ENCODE measurements at regions of chr7 and their contacts with region 1.

Region 1: DNA sequence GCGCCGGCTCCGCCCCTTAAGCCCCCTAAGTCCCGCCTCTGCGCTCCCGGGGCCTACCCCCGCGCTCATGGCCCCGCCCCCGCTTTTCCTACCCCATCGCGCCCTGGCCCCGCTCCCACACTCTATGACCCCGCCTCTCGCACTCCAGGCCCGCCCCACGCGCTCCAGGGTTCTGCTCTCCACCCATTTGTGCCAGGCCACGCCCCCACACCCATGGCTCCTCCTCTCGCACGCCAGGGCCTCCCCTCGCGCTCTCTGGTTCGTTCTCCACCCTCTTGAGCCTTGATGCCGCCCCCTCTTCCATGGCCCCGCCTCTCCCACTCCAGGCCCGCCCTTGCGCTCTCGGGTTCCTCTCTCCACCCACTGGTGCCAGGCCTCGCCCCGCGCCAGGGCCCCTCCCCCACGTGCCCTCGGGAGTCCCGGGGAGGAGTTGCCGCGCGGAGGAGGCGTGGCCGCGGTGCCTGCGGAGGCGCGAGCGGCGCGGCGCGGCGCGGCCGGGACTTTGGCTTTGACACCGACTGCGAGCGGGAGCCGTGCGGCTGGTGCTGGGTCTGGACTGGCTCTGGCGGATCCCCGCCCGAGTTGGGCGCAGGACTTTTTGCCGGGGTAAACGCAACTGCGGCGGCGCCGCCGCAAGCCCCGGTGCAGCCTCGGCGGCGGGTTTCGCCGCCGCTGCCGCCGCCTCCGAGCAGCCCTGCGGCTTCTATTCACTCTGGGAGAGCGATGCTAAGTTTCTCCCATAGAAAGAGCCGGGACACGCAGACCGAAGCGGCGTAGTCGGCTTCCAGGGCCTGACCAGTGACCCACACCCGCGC is at the start of gene EEPD1:
- DNase-seq: peak; percentile 97 to 100
- H3K4me3 ChIP-seq: peak within 1 kb of the TSS; percentile 71
- H3K27ac ChIP-seq: peak within 1 kb of the TSS; percentile 24; the same call in 1 of the 2 replicates
- H3K4me1 ChIP-seq: peaks cover 63% of the 10 kb centered on the region
- H3K27me3 ChIP-seq: no peaks in the 10 kb centered on the region
- CTCF ChIP-seq: no peak
- total RNA-seq, gene EEPD1: 6.0 and 9.4 TPM in 2 replicates

Region 2: DNA sequence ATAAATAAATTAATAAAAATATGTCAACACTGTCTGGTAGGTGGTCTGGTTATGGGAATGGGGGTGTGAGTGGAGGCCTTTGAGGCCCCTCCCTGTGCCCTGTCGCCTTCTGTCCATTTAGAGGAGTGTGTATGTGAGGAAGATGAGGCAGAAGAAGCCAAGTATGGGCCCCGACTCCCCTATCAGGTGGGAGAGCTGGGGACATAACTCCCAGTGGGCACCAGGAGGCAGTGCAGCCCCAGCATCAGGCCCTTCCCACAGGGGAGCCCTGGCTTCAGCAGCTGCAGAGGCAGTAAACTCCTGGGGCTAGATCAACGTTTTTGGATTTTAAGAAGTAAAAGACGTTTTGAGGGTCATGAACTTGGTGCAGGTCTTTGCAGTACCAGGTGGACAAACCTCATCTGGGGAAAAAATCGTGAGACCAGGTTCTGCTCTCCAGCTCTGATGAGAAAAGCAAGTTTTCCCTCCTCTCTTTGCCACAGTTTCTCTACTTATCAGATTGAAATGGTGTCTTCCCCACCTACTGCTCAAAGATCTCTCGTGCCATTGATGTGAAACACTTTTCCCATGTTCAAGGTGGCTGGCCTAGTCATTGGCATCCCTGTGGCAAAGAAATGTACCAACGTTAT is 167.7 kb before region 1 on chr7:
- CTCF ChIA-PET with region 1: no interaction called
- POLR2A ChIA-PET with region 1: no interaction called
- intact Hi-C with region 1: loop called (anchors 5 kb)
- DNase-seq: peak; percentile 57 to 84
- H3K4me3 ChIP-seq: no peak overlapping the region
- H3K27ac ChIP-seq: no peak overlapping the region
- H3K4me1 ChIP-seq: peaks cover 18% of the 10 kb centered on the region
- H3K27me3 ChIP-seq: no peaks in the 10 kb centered on the region
- CTCF ChIP-seq: peak; percentile 99

Region 3: DNA sequence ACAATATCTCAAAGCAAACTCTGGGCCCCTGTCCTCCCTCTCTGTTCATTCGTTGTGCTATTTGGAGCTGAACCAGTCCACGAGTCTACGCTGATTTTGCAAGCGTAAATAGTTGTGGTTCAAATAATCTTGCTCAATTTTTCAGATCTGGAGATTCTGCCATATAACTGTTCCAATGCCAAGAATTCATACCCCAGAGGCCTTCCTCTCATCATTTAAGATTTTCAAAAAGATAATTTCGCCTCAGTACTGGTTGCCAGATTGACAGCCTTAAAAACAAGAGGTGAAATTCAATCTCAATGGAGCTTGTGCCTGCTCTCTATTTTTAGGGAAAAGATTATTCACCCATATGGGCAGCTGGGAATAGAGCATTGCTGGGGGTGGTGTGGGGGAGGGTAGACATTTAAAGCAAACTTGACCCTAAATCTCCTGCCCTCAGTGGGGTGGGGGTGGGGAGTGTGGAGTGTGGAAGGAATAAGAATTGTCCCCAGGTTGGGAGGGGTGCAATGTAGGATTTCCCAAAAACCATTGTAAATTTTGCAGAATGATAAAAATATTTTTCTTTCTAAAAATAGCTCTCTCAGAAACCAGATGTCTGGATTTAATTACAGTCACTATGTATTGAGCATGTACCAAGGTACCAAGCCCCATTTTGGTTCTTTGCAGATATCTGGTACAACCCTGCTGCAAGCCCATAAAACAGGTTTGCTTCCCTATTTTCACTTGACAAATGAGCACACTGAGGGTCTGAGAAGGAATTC is 104.6 kb before region 1 on chr7:
- CTCF ChIA-PET with region 1: no interaction called
- POLR2A ChIA-PET with region 1: no interaction called
- intact Hi-C with region 1: loop called (anchors 1 kb)
- DNase-seq: peak; percentile 55 to 98
- H3K4me3 ChIP-seq: no peak overlapping the region
- H3K27ac ChIP-seq: peak overlapping the region; percentile 28
- H3K4me1 ChIP-seq: peaks cover 61% of the 10 kb centered on the region
- H3K27me3 ChIP-seq: no peaks in the 10 kb centered on the region
- CTCF ChIP-seq: no peak

Region 4: GRCh38 chr7:36128448-36129047 is 24.4 kb before region 1 on chr7:
- CTCF ChIA-PET with region 1: interaction called, 3 read pairs
- POLR2A ChIA-PET with region 1: no interaction called
- intact Hi-C with region 1: loop called (anchors 1 kb)
- DNase-seq: peak; percentile 82 to 95
- H3K4me3 ChIP-seq: peak overlapping the region; percentile 40
- H3K27ac ChIP-seq: peak overlapping the region; percentile 86
- H3K4me1 ChIP-seq: peaks cover 33% of the 10 kb centered on the region
- H3K27me3 ChIP-seq: no peaks in the 10 kb centered on the region
- CTCF ChIP-seq: peak; percentile 100

Region 5: GRCh38 chr7:36214608-36215456 is 61.9 kb after region 1 on chr7:
- CTCF ChIA-PET with region 1: no interaction called
- POLR2A ChIA-PET with region 1: no interaction called
- intact Hi-C with region 1: no loop called
- DNase-seq: no peak
- H3K4me3 ChIP-seq: no peak overlapping the region
- H3K27ac ChIP-seq: no peak overlapping the region
- H3K4me1 ChIP-seq: no peaks in the 10 kb centered on the region
- H3K27me3 ChIP-seq: no peaks in the 10 kb centered on the region
- CTCF ChIP-seq: no peak